ENCODE measurements at regions of chr1 and their contacts with region 1.

Region 1: GRCh38 chr1:84433258-84434080 is 35.2 kb downstream of the DNASE2B start:
- DNase-seq: peak; percentile 69
- H3K4me3 Mint-ChIP-seq: no peak overlapping the region
- H3K27ac Mint-ChIP-seq: peak overlapping the region; percentile 48
- H3K4me1 Mint-ChIP-seq: peaks cover 16% of the 10 kb centered on the region
- H3K27me3 Mint-ChIP-seq: no peaks in the 10 kb centered on the region
- CTCF ChIP-seq: peak; percentile 75

Region 2: DNA sequence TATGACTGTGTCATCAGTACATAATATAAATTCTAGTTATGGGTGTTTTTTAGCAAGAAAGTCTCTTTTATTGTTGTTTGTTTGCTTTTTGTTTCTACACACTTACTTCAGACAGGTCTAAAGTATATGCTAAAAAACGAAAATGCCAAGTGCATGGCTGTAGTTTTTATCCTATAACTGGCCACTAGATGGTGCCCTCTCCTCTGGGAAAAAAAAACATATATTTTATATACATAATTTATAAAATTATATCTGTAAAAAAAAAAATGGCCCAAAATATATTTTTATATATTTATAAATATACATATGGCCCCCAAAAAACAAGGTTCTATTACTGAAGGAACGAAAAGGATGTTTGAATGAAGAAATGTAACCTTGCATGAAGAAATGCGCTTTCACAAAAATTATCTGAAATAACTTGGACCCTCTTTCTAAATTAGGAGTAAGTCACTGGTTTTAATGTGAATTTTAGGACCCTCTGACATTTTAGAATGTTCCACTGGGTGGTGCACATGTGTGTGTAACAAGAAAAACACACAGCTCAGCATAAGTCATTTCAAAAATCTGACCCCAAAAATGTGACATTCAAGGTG is 528.1 kb before region 1 on chr1:
- CTCF ChIA-PET with region 1: no interaction called
- intact Hi-C with region 1: loop called (anchors 10 kb)
- DNase-seq: peak; percentile 18
- H3K4me3 Mint-ChIP-seq: no peak overlapping the region
- H3K27ac Mint-ChIP-seq: no peak overlapping the region
- H3K4me1 Mint-ChIP-seq: peaks cover 29% of the 10 kb centered on the region
- H3K27me3 Mint-ChIP-seq: no peaks in the 10 kb centered on the region
- CTCF ChIP-seq: no peak

Region 3: DNA sequence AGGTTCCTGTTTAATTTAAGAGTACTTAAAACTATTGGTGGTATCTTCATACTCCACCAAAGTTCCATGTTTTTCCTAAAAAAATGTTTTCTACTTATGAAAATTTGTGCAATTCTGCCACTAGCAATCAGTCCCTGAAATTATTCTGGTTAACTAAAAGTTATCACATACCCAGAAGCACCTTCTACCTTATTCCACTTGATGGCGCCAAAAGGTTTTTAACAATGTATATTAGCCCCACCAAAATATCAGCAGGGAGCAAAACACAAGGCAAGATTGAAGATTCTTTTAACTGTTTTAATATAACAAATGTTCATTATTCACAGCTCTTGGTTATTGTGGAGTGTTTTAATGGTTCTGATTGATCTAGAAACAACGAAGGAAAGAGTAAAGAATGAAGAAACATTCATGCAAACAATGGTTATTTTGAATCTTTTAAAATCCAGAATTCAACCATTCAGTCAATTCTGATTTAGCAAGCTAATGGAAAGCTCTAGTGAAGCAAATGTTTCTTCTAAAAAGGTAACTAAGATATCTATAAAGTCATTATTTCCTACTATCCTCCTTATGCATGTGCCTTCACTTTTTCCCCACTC is 501.7 kb before region 1 on chr1:
- CTCF ChIA-PET with region 1: no interaction called
- intact Hi-C with region 1: loop called (anchors 5 kb)
- DNase-seq: peak; percentile 25
- H3K4me3 Mint-ChIP-seq: no peak overlapping the region
- H3K27ac Mint-ChIP-seq: no peak overlapping the region
- H3K4me1 Mint-ChIP-seq: no peaks in the 10 kb centered on the region
- H3K27me3 Mint-ChIP-seq: no peaks in the 10 kb centered on the region
- CTCF ChIP-seq: peak; percentile 24

Region 4: GRCh38 chr1:84253891-84254290 is 179.6 kb before region 1 on chr1:
- CTCF ChIA-PET with region 1: no interaction called
- intact Hi-C with region 1: loop called (anchors 5 kb)
- DNase-seq: peak; percentile 84
- H3K4me3 Mint-ChIP-seq: no peak overlapping the region
- H3K27ac Mint-ChIP-seq: peak overlapping the region; percentile 70
- H3K4me1 Mint-ChIP-seq: peaks cover 60% of the 10 kb centered on the region
- H3K27me3 Mint-ChIP-seq: no peaks in the 10 kb centered on the region
- CTCF ChIP-seq: no peak

Region 5: GRCh38 chr1:84301004-84301784 is 132.3 kb before region 1 on chr1 and contains the start of gene SAMD13:
- CTCF ChIA-PET with region 1: interaction called, 6 read pairs
- intact Hi-C with region 1: loop called (anchors 1 kb)
- DNase-seq: peak; percentile 67
- H3K4me3 Mint-ChIP-seq: peak within 1 kb of the TSS; percentile 62
- H3K27ac Mint-ChIP-seq: peak within 1 kb of the TSS; percentile 79
- H3K4me1 Mint-ChIP-seq: peaks cover 46% of the 10 kb centered on the region
- H3K27me3 Mint-ChIP-seq: no peaks in the 10 kb centered on the region
- CTCF ChIP-seq: no peak
- total RNA-seq, gene SAMD13: 1.7 and 1.8 TPM in 2 replicates

Region 6: GRCh38 chr1:84365225-84366221 is 67.9 kb before region 1 on chr1:
- CTCF ChIA-PET with region 1: interaction called, 5 read pairs
- intact Hi-C with region 1: loop called (anchors 5 kb)
- DNase-seq: peak; percentile 76
- H3K4me3 Mint-ChIP-seq: no peak overlapping the region
- H3K27ac Mint-ChIP-seq: peak overlapping the region; percentile 89
- H3K4me1 Mint-ChIP-seq: peaks cover 31% of the 10 kb centered on the region
- H3K27me3 Mint-ChIP-seq: no peaks in the 10 kb centered on the region
- CTCF ChIP-seq: no peak

Region 7: GRCh38 chr1:84467298-84467697 is 33.8 kb after region 1 on chr1:
- CTCF ChIA-PET with region 1: no interaction called
- intact Hi-C with region 1: no loop called
- DNase-seq: no peak
- H3K4me3 Mint-ChIP-seq: no peak overlapping the region
- H3K27ac Mint-ChIP-seq: no peak overlapping the region
- H3K4me1 Mint-ChIP-seq: no peaks in the 10 kb centered on the region
- H3K27me3 Mint-ChIP-seq: no peaks in the 10 kb centered on the region
- CTCF ChIP-seq: no peak